PC-3 (cell line): ENCODE measurements at regions of chr7 and their contacts with region 1.

Region 1: DNA sequence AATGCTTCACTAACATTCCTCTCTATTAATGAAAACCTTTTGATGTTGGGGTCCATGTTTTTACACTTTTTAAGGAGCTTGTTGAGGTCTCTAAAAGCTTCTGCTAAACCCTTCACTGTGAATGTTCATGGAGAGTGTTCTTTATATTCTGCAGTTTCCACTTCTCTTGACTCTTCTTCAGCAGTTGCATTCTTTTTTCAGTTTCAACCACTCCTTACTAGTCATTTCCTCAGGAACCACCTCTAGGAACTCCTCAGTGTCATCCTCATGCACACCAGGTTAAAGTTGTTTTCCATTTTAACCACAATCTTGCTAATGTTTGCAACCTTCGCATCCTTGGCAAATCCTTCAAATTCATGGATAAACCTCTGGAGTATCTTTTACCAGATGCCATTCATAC is 821.6 kb downstream of the ANKRD7 start:
- DNase-seq: no peak
- ATAC-seq: no peak
- H3K4me3 ChIP-seq: no peak overlapping the region
- H3K27ac ChIP-seq: no peak overlapping the region
- H3K4me1 ChIP-seq: no peaks in the 10 kb centered on the region
- H3K27me3 ChIP-seq: no peaks in the 10 kb centered on the region
- CTCF ChIP-seq: no peak

Region 2: GRCh38 chr7:118420888-118421287 is 625.2 kb before region 1 on chr7:
- CTCF ChIA-PET with region 1: no interaction called
- POLR2A ChIA-PET with region 1: no interaction called
- intact Hi-C with region 1: loop called (anchors 5 kb)
- DNase-seq: no peak
- ATAC-seq: no peak
- H3K4me3 ChIP-seq: no peak overlapping the region
- H3K27ac ChIP-seq: no peak overlapping the region
- H3K4me1 ChIP-seq: no peaks in the 10 kb centered on the region
- H3K27me3 ChIP-seq: no peaks in the 10 kb centered on the region
- CTCF ChIP-seq: no peak

Region 3: DNA sequence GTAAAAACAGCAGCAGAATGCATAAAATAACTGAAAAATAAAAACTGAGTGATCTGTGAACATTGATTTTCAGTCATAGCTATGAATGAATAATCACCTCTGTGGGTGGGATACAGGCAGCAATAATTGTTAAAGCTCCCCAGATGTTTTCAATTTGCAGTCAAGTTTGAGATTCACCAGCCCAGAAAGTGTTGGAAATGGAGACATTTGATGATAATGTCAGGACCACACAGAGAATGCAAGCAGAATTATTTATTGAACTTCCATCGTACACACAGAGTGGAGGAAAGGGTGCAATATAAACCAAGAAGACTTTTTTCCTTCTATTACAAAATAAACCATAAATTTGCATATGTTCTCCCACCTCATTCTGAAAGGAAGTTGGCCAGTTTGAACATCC is 219.8 kb before region 1 on chr7:
- CTCF ChIA-PET with region 1: no interaction called
- POLR2A ChIA-PET with region 1: no interaction called
- intact Hi-C with region 1: no loop called
- DNase-seq: no peak
- ATAC-seq: no peak
- H3K4me3 ChIP-seq: no peak overlapping the region
- H3K27ac ChIP-seq: no peak overlapping the region
- H3K4me1 ChIP-seq: no peaks in the 10 kb centered on the region
- H3K27me3 ChIP-seq: no peaks in the 10 kb centered on the region
- CTCF ChIP-seq: no peak

Region 4: GRCh38 chr7:118995350-118995749 is 50.7 kb before region 1 on chr7:
- CTCF ChIA-PET with region 1: no interaction called
- POLR2A ChIA-PET with region 1: no interaction called
- intact Hi-C with region 1: no loop called
- DNase-seq: no peak
- ATAC-seq: no peak
- H3K4me3 ChIP-seq: no peak overlapping the region
- H3K27ac ChIP-seq: no peak overlapping the region
- H3K4me1 ChIP-seq: no peaks in the 10 kb centered on the region
- H3K27me3 ChIP-seq: no peaks in the 10 kb centered on the region
- CTCF ChIP-seq: no peak